ENCODE measurements at regions of chr1 and their contacts with region 1.

Region 1: GRCh38 chr1:94805912-94806311 is 14.2 kb upstream of the SLC44A3 start:
- DNase-seq: no peak
- ATAC-seq: peak; percentile 83
- H3K4me3 ChIP-seq: no peak overlapping the region
- H3K27ac ChIP-seq: no peak overlapping the region
- H3K4me1 ChIP-seq: peaks cover 33% of the 10 kb centered on the region
- H3K27me3 ChIP-seq: no peaks in the 10 kb centered on the region
- CTCF ChIP-seq: peak; percentile 99

Region 2: DNA sequence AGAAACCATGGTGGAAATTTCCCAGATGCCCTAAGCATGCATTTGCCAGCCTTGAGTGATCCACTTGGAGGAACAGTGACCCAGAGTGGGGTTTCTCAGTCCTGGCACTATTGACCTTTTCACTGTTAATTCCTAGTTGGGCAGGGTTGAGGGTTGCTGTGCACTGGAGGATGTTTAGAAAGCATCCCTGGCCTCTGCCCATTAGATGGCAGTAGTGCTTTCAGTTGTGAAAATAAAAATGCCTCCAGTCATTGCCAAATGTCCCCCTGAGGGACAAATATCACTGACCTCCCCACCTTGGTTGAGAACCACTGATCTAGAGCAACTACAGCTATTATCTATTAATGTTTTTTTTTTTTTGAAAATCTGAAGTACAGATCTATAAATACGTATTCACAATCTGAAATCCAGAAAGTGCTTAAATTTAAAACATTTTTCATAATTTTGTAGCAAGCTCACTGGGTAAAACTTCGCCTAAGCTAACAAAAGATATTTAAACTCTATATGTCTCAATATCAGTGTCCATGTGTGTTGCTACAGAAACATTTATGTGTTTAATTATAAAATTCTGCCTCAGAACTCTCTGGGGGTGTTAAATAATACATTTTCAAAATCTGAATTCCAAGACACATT is 291.7 kb before region 1 on chr1:
- intact Hi-C with region 1: loop called (anchors 5 kb)
- DNase-seq: no peak
- ATAC-seq: peak; percentile 83
- H3K4me3 ChIP-seq: no peak overlapping the region
- H3K27ac ChIP-seq: no peak overlapping the region
- H3K4me1 ChIP-seq: no peaks in the 10 kb centered on the region
- H3K27me3 ChIP-seq: no peaks in the 10 kb centered on the region
- CTCF ChIP-seq: peak; percentile 64

Region 3: DNA sequence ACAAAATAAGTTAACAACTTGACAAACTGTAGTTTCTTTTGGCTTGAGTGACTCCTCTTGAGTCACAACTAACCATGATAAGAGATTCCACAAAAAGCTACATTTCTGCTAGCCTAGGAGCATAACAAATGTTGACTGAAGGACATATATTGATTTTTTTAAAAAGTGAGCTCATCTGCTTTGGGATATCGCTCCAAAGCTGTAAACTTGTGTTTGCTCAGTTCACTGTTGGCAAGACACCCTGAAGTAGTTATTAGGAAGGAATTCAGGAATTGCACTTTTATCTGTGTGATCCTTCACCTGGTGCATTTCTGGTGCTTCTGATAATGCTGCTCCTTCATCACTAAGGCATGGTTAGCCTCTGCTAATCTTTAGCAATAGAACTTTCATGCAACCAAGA is 451.8 kb after region 1 on chr1:
- intact Hi-C with region 1: no loop called
- DNase-seq: no peak
- ATAC-seq: no peak
- H3K4me3 ChIP-seq: no peak overlapping the region
- H3K27ac ChIP-seq: no peak overlapping the region
- H3K4me1 ChIP-seq: no peaks in the 10 kb centered on the region
- H3K27me3 ChIP-seq: no peaks in the 10 kb centered on the region
- CTCF ChIP-seq: no peak